GM13977 (cell line): ENCODE measurements at regions of chr9 and their contacts with region 1.

Region 1: GRCh38 chr9:109903515-109904138 is 123.6 kb downstream of the PALM2AKAP2 start:
- DNase-seq: peak; percentile 55
- CTCF ChIP-seq: peak; percentile 79

Region 2: DNA sequence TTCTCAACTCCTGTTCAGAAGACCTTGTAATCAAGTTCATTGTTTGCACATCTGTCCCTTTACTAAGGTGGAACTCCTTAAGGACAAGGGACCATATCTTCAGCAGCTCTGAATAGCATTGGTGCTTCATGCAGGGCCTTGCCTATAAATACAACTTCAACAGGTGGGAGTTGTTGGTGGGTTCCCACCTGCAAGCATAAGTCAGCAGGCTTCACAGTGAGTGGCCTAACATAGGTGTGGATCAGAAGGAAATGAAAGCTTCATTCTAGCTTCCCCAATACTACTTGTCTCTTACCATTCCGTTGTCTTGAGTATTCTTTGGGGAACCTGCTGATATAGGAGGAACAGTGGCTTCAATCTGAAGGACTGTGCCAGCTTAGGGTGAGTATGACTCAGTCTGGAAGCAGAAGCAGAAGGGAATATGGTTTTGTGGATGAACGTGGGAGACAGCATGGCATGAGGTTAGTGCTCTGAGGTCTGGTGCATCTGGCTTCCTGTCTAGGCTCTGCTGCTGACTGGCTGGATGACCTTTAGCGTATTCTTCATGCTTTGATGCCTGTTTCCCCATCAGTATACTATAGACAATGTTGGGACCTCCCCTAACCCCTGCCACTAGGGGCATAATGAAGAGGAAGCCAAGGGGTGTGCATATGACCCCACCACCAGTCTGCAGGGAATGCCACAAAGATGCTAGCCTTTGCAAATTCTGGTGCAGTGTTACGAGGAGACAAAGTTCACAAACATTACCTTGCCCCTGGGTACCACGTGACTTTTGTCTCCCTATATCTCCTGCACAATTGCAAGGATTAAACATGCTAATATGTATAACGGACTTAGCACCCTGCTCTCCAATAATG is 68.6 kb after region 1 on chr9:
- in situ Hi-C with region 1: loop called (anchors 10 kb)
- DNase-seq: no peak
- CTCF ChIP-seq: peak; percentile 41

Region 3: GRCh38 chr9:110152704-110153374 is 249.2 kb after region 1 on chr9:
- in situ Hi-C with region 1: loop called (anchors 5 kb)
- DNase-seq: peak; percentile 27
- CTCF ChIP-seq: peak; percentile 74